ENCODE measurements at regions of chr7 and their contacts with region 1.

Region 1: GRCh38 chr7:18345641-18346234 is 149.8 kb upstream of the HDAC9 start:
- DNase-seq: peak in 1 of 2 donors; percentile 14
- ATAC-seq: peak in 1 of 8 donors; percentile 39
- H3K4me3 ChIP-seq: no peak overlapping the region
- H3K27ac ChIP-seq: no peak overlapping the region
- H3K4me1 ChIP-seq: no peaks in the 10 kb centered on the region
- H3K27me3 ChIP-seq: no peaks in the 10 kb centered on the region
- CTCF ChIP-seq: peak; percentile 61 to 81 (median 79)

Region 2: DNA sequence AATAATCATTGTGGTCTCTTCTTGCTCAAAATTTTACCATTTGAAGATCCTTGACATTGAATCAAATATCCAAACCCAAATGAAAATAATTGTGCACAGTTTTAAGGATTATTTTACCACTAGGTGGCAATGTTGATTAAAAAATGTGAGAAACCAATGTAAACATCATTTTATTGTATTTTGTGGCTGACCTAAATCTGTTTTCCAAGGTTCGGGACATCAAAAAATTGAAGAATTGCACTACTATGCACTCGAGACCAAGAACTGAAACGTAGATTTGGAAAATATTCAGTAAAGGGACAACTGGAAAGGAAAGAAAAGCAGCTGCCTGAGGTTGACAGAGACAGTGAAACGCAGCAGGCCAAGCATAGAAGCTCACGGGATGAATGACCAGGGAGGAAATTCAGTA is 664.8 kb before region 1 on chr7:
- intact Hi-C with region 1: loop called in 4 of 10 experiments (anchors 2 to 10 kb)
- DNase-seq: no peak
- ATAC-seq: peak in 3 of 8 donors; percentile 36 to 43 (median 36)
- H3K4me3 ChIP-seq: no peak overlapping the region
- H3K27ac ChIP-seq: peak overlapping the region in 1 of 10 donors; percentile 58
- H3K4me1 ChIP-seq: peaks cover 0 to 46% (median 15%) of the 10 kb centered on the region in 9 donors
- H3K27me3 ChIP-seq: no peaks in the 10 kb centered on the region
- CTCF ChIP-seq: peak; percentile 33 to 77 (median 63)

Region 3: DNA sequence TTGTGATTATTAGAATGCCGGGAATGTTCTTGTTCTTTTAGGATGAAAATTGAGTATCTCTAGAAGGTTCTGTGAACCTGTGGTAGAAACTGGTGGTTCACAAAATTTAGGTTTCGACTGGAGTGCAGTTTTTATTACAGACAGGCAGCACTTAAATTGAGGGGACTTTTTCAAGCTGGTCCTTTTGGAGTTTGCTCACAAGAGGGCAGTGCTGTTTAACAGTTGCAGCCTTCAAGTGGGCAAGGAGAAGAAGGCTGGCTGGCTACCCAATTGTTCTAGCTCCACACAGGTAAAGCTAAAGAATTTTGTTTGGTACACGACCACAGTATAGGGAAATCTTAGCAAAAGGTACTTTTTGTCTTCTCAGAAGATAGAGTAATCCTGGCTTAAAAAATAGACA is 639.0 kb before region 1 on chr7:
- intact Hi-C with region 1: loop called in 2 of 10 experiments (anchors 10 kb)
- DNase-seq: peak in 1 of 2 donors; percentile 43
- ATAC-seq: peak in 6 of 8 donors; percentile 50 to 78 (median 64)
- H3K4me3 ChIP-seq: no peak overlapping the region
- H3K27ac ChIP-seq: no peak overlapping the region
- H3K4me1 ChIP-seq: no peaks in the 10 kb centered on the region
- H3K27me3 ChIP-seq: no peaks in the 10 kb centered on the region
- CTCF ChIP-seq: peak; percentile 17 to 72 (median 58)

Region 4: DNA sequence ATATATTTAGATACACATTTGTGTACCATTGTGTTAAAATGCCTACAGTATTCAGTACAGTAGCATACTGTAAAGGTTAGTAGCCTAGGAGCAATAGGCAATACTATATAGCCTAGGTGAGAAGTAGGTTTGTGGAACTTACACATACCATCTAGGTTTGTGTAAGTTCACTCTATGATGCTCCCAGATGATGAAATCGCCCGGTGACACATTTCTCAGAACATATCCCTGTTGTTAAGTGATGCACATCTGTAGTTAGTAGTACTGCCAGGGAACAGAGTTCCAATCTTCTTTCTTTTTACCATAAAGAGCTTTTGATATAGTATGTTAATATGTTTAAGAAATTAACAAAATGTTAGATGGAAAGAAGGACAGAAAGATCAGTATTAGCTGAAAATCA is 543.7 kb before region 1 on chr7:
- intact Hi-C with region 1: no loop called
- DNase-seq: no peak
- ATAC-seq: no peak
- H3K4me3 ChIP-seq: no peak overlapping the region
- H3K27ac ChIP-seq: no peak overlapping the region
- H3K4me1 ChIP-seq: no peaks in the 10 kb centered on the region
- H3K27me3 ChIP-seq: no peaks in the 10 kb centered on the region
- CTCF ChIP-seq: no peak

Region 5: GRCh38 chr7:17965603-17966002 is 380.1 kb before region 1 on chr7:
- intact Hi-C with region 1: loop called in 6 of 10 experiments (anchors 5 to 10 kb)
- DNase-seq: no peak
- ATAC-seq: no peak
- H3K4me3 ChIP-seq: no peak overlapping the region
- H3K27ac ChIP-seq: no peak overlapping the region
- H3K4me1 ChIP-seq: no peaks in the 10 kb centered on the region
- H3K27me3 ChIP-seq: no peaks in the 10 kb centered on the region
- CTCF ChIP-seq: no peak

Region 6: DNA sequence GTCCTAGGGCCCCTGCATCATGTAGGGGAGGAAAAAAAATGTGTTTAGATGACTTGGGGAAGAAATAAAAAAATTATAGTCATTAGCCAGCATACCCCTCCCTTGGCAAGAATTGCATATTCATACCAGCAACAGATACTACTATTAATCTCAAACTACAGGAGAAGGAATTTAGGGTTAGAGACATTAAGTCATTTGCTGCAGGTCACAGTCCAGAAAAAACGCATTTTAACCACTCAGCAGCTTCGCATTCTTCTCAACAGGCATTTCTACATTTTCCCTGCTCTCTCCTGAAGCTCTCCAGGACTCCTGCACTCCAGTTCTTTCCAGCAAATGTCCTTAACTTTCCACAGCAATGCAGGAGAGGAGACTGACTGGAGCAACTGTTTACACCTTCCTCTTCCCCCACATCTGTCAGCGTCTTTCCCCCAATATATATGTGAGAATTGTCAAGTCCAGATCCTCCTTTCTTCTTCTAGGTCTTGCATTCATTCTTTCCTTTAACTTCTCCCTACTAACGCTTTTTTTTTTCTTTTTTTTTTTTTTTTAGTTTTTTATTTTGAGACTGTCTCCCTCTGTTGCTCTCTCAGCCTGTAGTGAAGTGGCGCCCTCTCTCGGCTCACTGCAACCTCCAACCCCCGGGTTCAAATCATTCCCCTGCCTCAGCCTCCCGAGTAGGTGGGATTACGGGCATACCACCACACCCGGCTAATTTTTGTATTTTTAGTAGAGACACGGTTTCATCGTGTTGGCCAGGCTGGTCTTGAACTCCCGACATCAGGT is 353.7 kb before region 1 on chr7:
- intact Hi-C with region 1: loop called in 1 of 10 experiments (anchors 10 kb)
- DNase-seq: no peak
- ATAC-seq: no peak
- H3K4me3 ChIP-seq: no peak overlapping the region
- H3K27ac ChIP-seq: no peak overlapping the region
- H3K4me1 ChIP-seq: peaks cover 0 to 5% (median 3%) of the 10 kb centered on the region in 9 donors
- H3K27me3 ChIP-seq: no peaks in the 10 kb centered on the region
- CTCF ChIP-seq: peak in 4 of 9 donors; percentile 14 to 29 (median 26)

Region 7: GRCh38 chr7:18212758-18213157 is 133.0 kb before region 1 on chr7:
- intact Hi-C with region 1: loop called in 2 of 10 experiments (anchors 5 to 10 kb)
- DNase-seq: no peak
- ATAC-seq: peak; percentile 49 to 92 (median 76)
- H3K4me3 ChIP-seq: no peak overlapping the region
- H3K27ac ChIP-seq: peak overlapping the region in 6 of 10 donors; percentile 5 to 66 (median 46)
- H3K4me1 ChIP-seq: peaks cover 0 to 31% (median 18%) of the 10 kb centered on the region in 9 donors
- H3K27me3 ChIP-seq: no peaks in the 10 kb centered on the region
- CTCF ChIP-seq: no peak

Region 8: GRCh38 chr7:18971839-18972238 is 626.1 kb after region 1 on chr7:
- intact Hi-C with region 1: no loop called
- DNase-seq: no peak
- ATAC-seq: no peak
- H3K4me3 ChIP-seq: no peak overlapping the region
- H3K27ac ChIP-seq: no peak overlapping the region
- H3K4me1 ChIP-seq: peaks cover 0 to 2% (median 0%) of the 10 kb centered on the region in 9 donors
- H3K27me3 ChIP-seq: no peaks in the 10 kb centered on the region
- CTCF ChIP-seq: no peak